Colonic mucosa (tissue), 4 donors: ENCODE measurements at regions of chr20 and their contacts with region 1.

Region 1: DNA sequence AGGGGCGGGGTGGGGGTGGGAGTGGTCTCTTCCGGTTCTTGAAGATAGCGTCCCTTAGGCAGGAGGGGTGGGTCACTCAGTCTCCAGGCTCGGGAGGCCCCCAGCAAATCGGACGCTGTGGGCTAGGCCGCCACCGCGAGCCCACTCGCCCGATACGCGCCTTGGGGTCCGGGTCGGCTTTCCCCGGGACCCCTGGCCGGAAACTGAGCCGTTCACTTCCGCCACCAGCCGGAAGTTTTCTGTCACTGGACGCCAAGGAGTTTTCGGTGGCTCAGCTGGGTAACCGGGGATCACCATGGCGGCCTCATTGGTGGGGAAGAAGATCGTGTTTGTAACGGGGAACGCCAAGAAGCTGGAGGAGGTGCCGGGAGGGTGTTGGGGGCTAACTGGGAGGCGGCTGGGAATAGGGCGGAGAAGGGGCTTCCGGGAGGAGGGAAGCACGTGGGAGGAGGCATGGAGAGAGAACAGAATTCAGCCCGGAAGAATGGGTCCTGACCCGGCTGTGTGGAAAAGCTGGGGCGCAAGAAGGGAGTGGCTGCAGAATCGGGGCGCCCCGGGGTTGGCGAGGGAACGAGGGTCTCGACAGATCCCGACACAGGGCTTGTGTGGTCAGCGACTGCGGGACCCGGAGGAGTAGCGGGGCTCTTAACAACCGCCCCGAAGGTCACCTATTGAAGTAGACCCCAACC is at the start of gene ITPA:
- DNase-seq: peak; percentile 73
- H3K4me3 ChIP-seq: peak within 1 kb of the TSS; percentile 95
- H3K27ac ChIP-seq: peak within 1 kb of the TSS; percentile 82
- H3K4me1 ChIP-seq: no peaks in the 10 kb centered on the region
- H3K27me3 ChIP-seq: no peaks in the 10 kb centered on the region
- CTCF ChIP-seq: no peak
- total RNA-seq, gene ITPA: 35.2 to 67.6 TPM

Region 2: DNA sequence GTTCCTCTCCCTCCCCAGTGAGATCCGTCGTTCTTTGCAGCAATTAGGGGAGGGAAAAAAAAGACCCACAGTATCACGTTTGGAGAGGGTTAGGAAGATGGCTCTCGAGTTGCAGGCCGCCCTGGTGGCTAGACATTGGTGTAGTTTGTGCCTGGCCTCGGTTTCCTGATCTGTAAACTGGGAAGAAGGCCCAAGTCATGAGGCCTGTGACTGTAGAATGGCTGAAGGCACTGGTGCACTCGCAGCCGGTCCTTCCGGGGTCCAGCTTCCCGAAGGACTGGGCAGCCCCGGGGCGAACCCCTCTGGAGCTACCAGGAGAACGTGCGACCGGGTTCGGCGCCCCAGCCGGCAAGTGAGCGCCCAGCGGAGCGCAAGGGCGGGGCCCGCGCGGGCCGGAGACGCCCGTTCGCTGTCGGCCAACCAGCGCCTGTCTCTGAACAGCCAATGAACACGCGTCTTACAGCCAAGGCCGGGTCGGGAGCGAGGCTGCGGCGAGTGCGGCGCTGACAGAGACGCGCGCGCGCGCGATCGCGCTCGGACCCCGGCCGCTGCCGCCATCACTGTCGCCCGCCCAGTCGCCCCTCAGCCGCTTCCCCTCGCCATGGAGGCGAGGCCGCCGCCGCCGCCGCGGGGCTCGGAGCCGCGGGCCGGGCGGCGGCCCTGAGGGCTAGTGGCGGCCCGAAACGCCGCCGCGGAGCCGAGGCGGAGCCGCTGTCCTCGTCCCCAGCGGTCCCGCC is 336.2 kb before region 1 on chr20 and contains the start of gene PTPRA:
- intact Hi-C with region 1: no loop called
- DNase-seq: peak; percentile 96
- H3K4me3 ChIP-seq: peak within 1 kb of the TSS; percentile 82
- H3K27ac ChIP-seq: peak within 1 kb of the TSS; percentile 68
- H3K4me1 ChIP-seq: no peaks in the 10 kb centered on the region
- H3K27me3 ChIP-seq: no peaks in the 10 kb centered on the region
- CTCF ChIP-seq: no peak
- total RNA-seq, gene PTPRA: 30.3 to 55.2 TPM

Region 3: GRCh38 chr20:3162080-3162611 is 47.3 kb before region 1 on chr20:
- intact Hi-C with region 1: loop called (anchors 5 kb)
- DNase-seq: no peak
- H3K4me3 ChIP-seq: no peak overlapping the region
- H3K27ac ChIP-seq: no peak overlapping the region
- H3K4me1 ChIP-seq: peaks cover 13% of the 10 kb centered on the region
- H3K27me3 ChIP-seq: no peaks in the 10 kb centered on the region
- CTCF ChIP-seq: no peak